ENCODE measurements at regions of chr19 and their contacts with region 1.

Region 1: DNA sequence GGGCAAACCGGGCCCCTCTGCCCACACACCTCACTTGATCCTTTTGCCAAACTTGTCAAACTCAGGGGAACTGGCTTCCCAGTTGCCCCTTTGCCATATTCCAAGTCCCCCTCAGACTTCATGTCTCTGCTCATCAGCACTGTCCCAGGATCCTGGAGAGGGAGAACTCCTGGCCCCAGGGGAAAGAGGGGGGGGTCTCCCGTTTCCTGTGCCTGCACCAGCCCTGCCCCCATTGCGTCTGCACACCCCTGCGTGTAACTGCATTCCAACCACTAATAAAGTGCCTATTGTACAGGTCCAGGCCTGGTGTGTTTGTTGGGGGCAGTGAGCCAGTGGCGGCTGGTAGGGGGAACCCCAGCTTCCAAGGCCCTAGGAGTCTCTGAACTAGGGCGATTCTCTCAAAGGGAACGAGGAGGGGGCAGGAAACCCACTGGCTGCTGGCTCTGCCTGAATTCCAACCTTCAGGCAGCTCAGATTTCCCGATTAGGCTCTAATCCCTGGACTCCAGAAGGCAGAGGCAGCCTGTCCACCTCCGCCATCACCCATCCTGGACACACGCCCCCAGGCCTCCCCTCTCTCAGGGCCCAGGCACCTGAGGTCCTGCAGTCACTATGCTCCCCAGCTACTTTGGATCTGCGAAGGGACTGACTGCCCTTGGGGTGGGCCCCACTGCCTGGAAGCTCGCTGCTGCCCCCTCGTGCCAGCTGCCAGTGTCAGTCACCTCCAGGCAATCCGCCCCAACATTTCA is 9.7 kb upstream of the ILF3 start:
- DNase-seq: no peak
- H3K4me3 ChIP-seq: no peak overlapping the region
- H3K27me3 ChIP-seq: no peaks in the 10 kb centered on the region
- CTCF ChIP-seq: peak; percentile 93

Region 2: GRCh38 chr19:10565567-10566407 is 78.6 kb before region 1 on chr19 and contains the start of gene KRI1:
- CTCF ChIA-PET with region 1: interaction called, 17 read pairs
- POLR2A ChIA-PET with region 1: interaction called, 6 read pairs
- DNase-seq: peak; percentile 84
- H3K4me3 ChIP-seq: peak within 1 kb of the TSS; percentile 99
- H3K27me3 ChIP-seq: no peaks in the 10 kb centered on the region
- CTCF ChIP-seq: peak; percentile 27
- polyA plus RNA-seq, gene KRI1: 8.4 and 10.0 TPM in 2 replicates

Region 3: DNA sequence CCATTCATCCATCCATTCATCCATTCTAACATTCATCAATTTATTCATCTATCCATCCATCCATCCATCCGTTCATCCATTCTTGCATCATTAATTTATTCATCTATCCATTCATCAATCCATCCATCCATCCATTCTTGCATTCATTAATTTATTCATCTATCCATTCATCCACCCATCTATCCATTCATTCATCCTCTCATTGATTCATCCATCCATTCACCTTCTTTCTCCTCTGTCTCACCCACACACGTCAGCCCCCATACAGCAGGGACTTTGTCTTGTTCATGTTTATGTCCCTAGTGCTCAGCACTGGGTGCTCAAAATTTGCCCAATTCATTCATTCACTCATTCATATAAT is 56.7 kb before region 1 on chr19:
- CTCF ChIA-PET with region 1: interaction called, 374 read pairs
- POLR2A ChIA-PET with region 1: interaction called, 29 read pairs
- DNase-seq: no peak
- H3K4me3 ChIP-seq: no peak overlapping the region
- H3K27me3 ChIP-seq: peaks cover 7% of the 10 kb centered on the region
- CTCF ChIP-seq: no peak

Region 4: GRCh38 chr19:10600149-10600548 is 44.3 kb before region 1 on chr19:
- CTCF ChIA-PET with region 1: interaction called, 11 read pairs
- POLR2A ChIA-PET with region 1: no interaction called
- DNase-seq: no peak
- H3K4me3 ChIP-seq: no peak overlapping the region
- H3K27me3 ChIP-seq: no peaks in the 10 kb centered on the region; the same call in 1 of the 2 replicates
- CTCF ChIP-seq: no peak

Region 5: GRCh38 chr19:10695401-10696398 is 51.3 kb after region 1 on chr19:
- CTCF ChIA-PET with region 1: interaction called, 46 read pairs
- POLR2A ChIA-PET with region 1: no interaction called
- DNase-seq: peak; percentile 69
- H3K4me3 ChIP-seq: no peak overlapping the region
- H3K27me3 ChIP-seq: no peaks in the 10 kb centered on the region
- CTCF ChIP-seq: no peak